Activated CD8-positive, alpha-beta T cell treated with anti-CD3 and anti-CD28 coated beads, Interleukin-2, amount 10 ng/mL, durations not matched to agents 7 days and 5 days (primary cell): ENCODE measurements at regions of chr16 and their contacts with region 1.

Region 1: GRCh38 chr16:67226804-67227557 is at the start of gene TMEM208:
- DNase-seq: peak; percentile 99
- ATAC-seq: peak; percentile 98
- H3K4me3 Mint-ChIP-seq: peak within 1 kb of the TSS; percentile 93
- H3K27ac Mint-ChIP-seq: peak within 1 kb of the TSS; percentile 94
- H3K4me1 Mint-ChIP-seq: peaks cover 47% of the 10 kb centered on the region
- H3K27me3 Mint-ChIP-seq: no peaks in the 10 kb centered on the region
- total RNA-seq, gene TMEM208: 33.7 TPM

Region 2: DNA sequence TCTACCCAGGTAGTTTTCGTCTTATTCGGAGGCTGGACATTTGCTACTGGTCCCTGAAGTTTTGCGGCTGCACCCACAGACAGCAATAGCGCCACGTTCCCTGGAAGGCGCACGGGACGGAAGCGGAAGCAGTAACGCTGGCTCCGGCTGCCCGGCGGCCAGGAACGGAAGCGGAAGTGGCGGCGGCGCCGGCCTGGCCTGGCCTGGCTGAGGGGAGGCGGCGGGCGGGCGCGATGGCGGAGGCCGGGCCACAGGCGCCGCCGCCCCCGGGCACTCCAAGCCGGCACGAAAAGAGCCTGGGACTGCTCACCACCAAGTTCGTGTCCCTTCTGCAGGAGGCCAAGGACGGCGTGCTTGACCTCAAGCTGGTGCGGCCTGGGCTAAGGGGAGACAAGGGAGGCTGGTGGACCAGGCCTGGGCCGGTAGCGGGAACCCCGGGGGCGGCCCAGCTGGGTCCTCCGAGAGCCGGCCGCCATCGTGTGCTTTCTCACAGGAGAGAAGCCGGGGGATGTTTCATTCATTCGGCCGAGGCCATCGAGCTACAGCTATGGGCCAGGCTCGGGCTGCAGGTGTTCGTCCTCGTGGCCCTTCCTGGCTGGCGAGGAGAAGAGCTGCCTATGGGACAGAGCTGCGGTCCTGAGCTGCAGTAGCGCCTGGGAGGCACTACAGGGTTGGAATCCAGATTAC is 34.8 kb before region 1 on chr16 and contains the start of gene E2F4:
- CTCF ChIA-PET with region 1: interaction called, 7 read pairs
- POLR2A ChIA-PET with region 1: interaction called, 11 read pairs
- DNase-seq: peak; percentile 90
- ATAC-seq: peak; percentile 95
- H3K4me3 Mint-ChIP-seq: peak within 1 kb of the TSS; percentile 91
- H3K27ac Mint-ChIP-seq: peak within 1 kb of the TSS; percentile 86
- H3K4me1 Mint-ChIP-seq: peaks cover 37% of the 10 kb centered on the region
- H3K27me3 Mint-ChIP-seq: no peaks in the 10 kb centered on the region
- total RNA-seq, gene E2F4: 134 to 138 TPM

Region 3: GRCh38 chr16:67246934-67247697 is 20.1 kb after region 1 on chr16 and contains the start of gene FHOD1:
- CTCF ChIA-PET with region 1: interaction called, 64 read pairs
- POLR2A ChIA-PET with region 1: interaction called, 70 read pairs
- DNase-seq: peak; percentile 99
- ATAC-seq: peak; percentile 76
- H3K4me3 Mint-ChIP-seq: peak within 1 kb of the TSS; percentile 88
- H3K27ac Mint-ChIP-seq: peak within 1 kb of the TSS; percentile 90
- H3K4me1 Mint-ChIP-seq: peaks cover 61% of the 10 kb centered on the region
- H3K27me3 Mint-ChIP-seq: peaks cover 9% of the 10 kb centered on the region
- total RNA-seq, gene FHOD1: 93.4 to 101 TPM

Region 4: GRCh38 chr16:67296422-67296821 is 69.4 kb after region 1 on chr16:
- CTCF ChIA-PET with region 1: no interaction called
- POLR2A ChIA-PET with region 1: no interaction called
- DNase-seq: no peak
- ATAC-seq: no peak
- H3K4me3 Mint-ChIP-seq: no peak overlapping the region
- H3K27ac Mint-ChIP-seq: no peak overlapping the region
- H3K4me1 Mint-ChIP-seq: no peaks in the 10 kb centered on the region
- H3K27me3 Mint-ChIP-seq: peaks cover 6% of the 10 kb centered on the region